Activated CD8-positive, alpha-beta T cell treated with anti-CD3 and anti-CD28 coated beads, Interleukin-2, amount 10 ng/mL, durations not matched to agents 7 days and 5 days (primary cell): ENCODE measurements at regions of chr9 and their contacts with region 1.

Region 1: GRCh38 chr9:98118640-98119601 is at the start of gene TRIM14:
- DNase-seq: peak; percentile 75
- ATAC-seq: peak; percentile 82
- H3K4me3 Mint-ChIP-seq: peak within 1 kb of the TSS; percentile 83
- H3K27ac Mint-ChIP-seq: peak within 1 kb of the TSS; percentile 92
- H3K4me1 Mint-ChIP-seq: peaks cover 44% of the 10 kb centered on the region
- H3K27me3 Mint-ChIP-seq: no peaks in the 10 kb centered on the region
- total RNA-seq, gene TRIM14: 85.2 to 90.5 TPM

Region 2: DNA sequence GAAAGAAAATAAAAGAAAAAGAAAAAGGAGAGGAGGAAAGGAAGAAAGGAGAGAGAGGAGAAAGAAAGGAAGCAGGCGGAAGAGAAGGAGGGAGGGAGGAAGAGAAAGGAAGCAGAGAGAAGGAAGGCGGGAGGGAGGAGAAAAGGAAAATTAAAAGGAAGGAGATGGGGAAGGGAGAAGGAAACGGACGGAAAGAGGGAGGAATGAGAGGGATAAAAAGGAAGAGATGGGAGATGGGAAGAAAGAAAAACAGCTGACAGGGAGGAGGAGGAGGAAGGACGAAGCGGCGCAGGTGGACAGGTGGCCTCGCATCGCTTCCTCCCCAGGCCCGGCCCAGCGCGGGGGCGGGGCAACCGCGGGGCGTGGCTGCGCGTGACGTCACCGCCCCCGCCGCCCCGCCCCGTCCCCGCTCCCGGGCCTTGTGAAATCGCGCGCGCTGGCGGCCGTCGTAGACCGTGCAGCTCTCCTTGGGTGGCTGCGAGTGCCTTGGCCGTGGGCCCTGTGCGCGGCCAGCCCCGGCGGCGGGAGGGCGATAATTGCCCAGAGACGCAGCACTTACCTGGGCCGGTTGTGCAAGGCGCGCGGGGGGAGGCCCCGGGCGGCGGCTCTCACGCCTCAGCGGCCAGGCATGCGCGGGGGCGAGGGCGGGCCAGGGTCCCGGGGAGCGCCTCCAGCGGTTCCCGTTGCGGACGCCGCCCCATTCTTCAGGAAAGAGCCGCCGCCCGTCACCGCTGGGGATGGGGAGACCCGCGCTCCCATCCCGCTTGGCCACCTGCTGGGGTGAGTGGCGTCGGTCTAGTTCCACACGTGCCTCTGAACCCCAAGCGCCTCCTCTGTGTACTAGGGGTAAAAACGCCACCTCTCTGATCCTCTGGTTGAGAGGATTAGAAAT is 315.5 kb before region 1 on chr9:
- CTCF ChIA-PET with region 1: no interaction called
- POLR2A ChIA-PET with region 1: no interaction called
- DNase-seq: peak; percentile 79
- ATAC-seq: peak; percentile 97
- H3K4me3 Mint-ChIP-seq: peak overlapping the region; percentile 62
- H3K27ac Mint-ChIP-seq: peak overlapping the region; percentile 48
- H3K4me1 Mint-ChIP-seq: peaks cover 4% of the 10 kb centered on the region
- H3K27me3 Mint-ChIP-seq: peaks cover 35% of the 10 kb centered on the region

Region 3: DNA sequence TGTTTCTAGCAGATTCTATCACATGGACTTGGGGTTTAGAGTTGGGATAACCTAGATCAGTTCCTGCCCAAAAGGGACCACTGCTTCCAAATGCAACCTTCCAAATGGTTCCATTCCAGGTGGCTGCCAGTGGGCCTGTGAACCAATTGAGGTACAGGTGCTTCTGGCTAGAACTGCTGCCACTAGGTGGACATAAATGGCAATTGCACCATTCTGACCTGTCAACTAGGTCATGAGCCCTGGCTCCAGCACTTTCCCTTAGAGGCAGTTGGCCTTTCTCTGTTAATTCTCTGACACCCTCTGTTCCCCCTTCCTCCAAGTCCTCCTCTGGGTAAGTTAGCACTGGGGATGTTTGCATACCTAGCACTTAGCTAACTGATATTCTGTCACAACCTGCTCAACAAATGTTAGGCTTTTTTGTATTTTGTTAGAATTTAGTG is 164.4 kb before region 1 on chr9:
- CTCF ChIA-PET with region 1: no interaction called
- POLR2A ChIA-PET with region 1: no interaction called
- DNase-seq: peak; percentile 71
- ATAC-seq: peak; percentile 98
- H3K4me3 Mint-ChIP-seq: no peak overlapping the region
- H3K27ac Mint-ChIP-seq: no peak overlapping the region
- H3K4me1 Mint-ChIP-seq: peaks cover 7% of the 10 kb centered on the region
- H3K27me3 Mint-ChIP-seq: peaks cover 6% of the 10 kb centered on the region

Region 4: DNA sequence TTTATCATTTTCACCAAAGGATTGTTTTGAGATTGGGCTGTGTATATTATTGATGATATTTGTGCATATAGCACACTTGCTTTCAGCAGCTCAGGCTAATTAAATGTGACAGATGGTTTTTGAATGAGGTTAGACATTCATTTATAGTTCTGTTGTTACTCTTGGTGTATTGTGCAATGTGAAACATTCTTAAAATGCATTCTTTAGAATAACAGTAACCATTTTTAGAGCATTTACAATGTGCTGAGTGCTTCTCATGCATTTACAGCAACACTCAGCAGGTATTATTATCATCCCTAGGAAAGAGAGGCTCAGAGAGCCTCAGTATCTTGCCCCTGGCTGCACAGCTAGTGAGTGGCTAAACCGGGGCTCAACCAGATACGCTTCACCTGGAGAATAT is 38.6 kb before region 1 on chr9:
- CTCF ChIA-PET with region 1: interaction called, 11 read pairs
- POLR2A ChIA-PET with region 1: no interaction called
- DNase-seq: no peak
- ATAC-seq: no peak
- H3K4me3 Mint-ChIP-seq: no peak overlapping the region
- H3K27ac Mint-ChIP-seq: no peak overlapping the region
- H3K4me1 Mint-ChIP-seq: peaks cover 43% of the 10 kb centered on the region
- H3K27me3 Mint-ChIP-seq: no peaks in the 10 kb centered on the region

Region 5: GRCh38 chr9:98101868-98102273 is 17.1 kb before region 1 on chr9:
- CTCF ChIA-PET with region 1: interaction called, 50 read pairs
- POLR2A ChIA-PET with region 1: interaction called, 33 read pairs
- DNase-seq: peak; percentile 93
- ATAC-seq: peak; percentile 98
- H3K4me3 Mint-ChIP-seq: peak overlapping the region; percentile 79
- H3K27ac Mint-ChIP-seq: peak overlapping the region; percentile 99
- H3K4me1 Mint-ChIP-seq: peaks cover 86% of the 10 kb centered on the region
- H3K27me3 Mint-ChIP-seq: no peaks in the 10 kb centered on the region

Region 6: DNA sequence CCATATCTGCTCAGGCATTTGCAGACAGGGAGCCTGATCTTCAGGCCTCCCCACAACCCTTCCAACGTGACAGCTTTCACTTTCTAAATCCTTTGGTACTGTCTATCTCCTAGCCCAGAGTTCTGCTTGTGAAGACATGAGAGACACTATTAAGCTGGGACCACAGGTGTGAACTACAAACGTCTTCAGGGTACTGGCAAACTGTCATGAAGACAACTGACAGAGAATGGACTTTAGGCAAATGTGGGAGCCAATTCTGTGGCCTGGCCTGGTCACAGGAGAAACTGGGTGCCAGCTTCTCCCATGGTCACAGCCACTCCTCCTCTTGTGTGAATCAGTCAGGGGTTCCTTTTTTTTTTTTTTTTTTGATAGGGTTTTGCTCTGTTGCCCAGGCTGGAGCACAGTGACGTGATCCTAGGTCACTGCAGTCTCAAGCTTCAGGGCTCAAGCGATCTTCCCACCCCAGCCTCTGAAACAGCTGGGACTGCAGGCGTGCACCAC is 10.3 kb before region 1 on chr9:
- CTCF ChIA-PET with region 1: interaction called, 50 read pairs
- POLR2A ChIA-PET with region 1: interaction called, 49 read pairs
- DNase-seq: peak; percentile 70
- ATAC-seq: peak; percentile 94
- H3K4me3 Mint-ChIP-seq: peak overlapping the region; percentile 64
- H3K27ac Mint-ChIP-seq: peak overlapping the region; percentile 95
- H3K4me1 Mint-ChIP-seq: peaks cover 82% of the 10 kb centered on the region
- H3K27me3 Mint-ChIP-seq: no peaks in the 10 kb centered on the region

Region 7: GRCh38 chr9:98129451-98129881 is 10.5 kb after region 1 on chr9:
- CTCF ChIA-PET with region 1: interaction called, 15 read pairs
- POLR2A ChIA-PET with region 1: interaction called, 3 read pairs
- DNase-seq: no peak
- ATAC-seq: peak; percentile 45
- H3K4me3 Mint-ChIP-seq: no peak overlapping the region
- H3K27ac Mint-ChIP-seq: peak overlapping the region; percentile 74
- H3K4me1 Mint-ChIP-seq: peaks cover 13% of the 10 kb centered on the region
- H3K27me3 Mint-ChIP-seq: no peaks in the 10 kb centered on the region

Region 8: DNA sequence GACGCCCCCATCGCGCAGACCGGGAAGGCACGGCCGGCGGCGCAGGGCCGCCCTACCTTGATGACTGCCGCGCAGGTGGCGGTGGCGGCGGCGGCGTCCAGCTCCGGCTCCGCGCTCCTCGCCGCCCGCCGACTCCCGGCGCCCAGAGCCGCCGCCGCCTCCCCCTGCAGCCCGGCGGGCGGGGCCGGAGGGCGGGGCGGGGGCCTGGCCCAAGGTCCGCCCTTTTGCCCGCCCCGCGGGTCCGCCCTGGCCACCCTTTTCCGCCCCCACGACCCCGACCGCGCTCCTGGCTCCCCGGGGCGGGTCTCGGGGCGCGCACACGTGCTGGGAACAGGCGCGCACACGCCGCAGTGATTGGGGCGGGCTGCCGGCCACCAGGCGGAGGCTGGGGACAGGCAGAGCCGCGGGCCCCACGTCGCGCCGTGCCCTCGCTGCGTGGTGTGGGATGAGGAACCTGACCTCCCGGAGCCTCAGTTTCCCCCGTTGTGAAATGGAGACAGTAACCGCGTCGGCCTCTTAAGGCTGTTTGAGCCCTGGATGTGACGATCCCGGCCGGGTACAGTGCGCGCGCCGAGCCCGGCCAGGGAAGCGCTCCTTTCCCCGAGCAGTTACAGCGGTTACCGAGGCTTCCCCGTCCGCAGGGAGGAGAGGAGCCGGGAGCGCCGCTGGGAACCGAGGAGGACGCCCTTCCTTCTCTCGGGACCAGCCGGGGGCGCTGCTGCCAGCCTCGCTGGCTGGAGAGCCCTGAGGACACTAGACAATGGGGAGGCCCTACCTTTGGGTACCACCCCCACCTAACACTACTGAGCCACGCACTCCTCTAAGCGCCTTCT is 73.8 kb after region 1 on chr9 and contains the start of gene CORO2A:
- CTCF ChIA-PET with region 1: interaction called, 13 read pairs
- POLR2A ChIA-PET with region 1: interaction called, 4 read pairs
- DNase-seq: peak; percentile 76
- ATAC-seq: peak; percentile 89
- H3K4me3 Mint-ChIP-seq: peak within 1 kb of the TSS; percentile 82
- H3K27ac Mint-ChIP-seq: peak within 1 kb of the TSS; percentile 55
- H3K4me1 Mint-ChIP-seq: peaks cover 30% of the 10 kb centered on the region
- H3K27me3 Mint-ChIP-seq: no peaks in the 10 kb centered on the region
- total RNA-seq, gene CORO2A: 9.2 TPM

Region 9: GRCh38 chr9:98333703-98334582 is 215.0 kb after region 1 on chr9:
- CTCF ChIA-PET with region 1: no interaction called
- POLR2A ChIA-PET with region 1: no interaction called
- DNase-seq: no peak
- ATAC-seq: no peak
- H3K4me3 Mint-ChIP-seq: no peak overlapping the region
- H3K27ac Mint-ChIP-seq: no peak overlapping the region
- H3K4me1 Mint-ChIP-seq: no peaks in the 10 kb centered on the region
- H3K27me3 Mint-ChIP-seq: peaks cover 9% of the 10 kb centered on the region